Activated T-helper 2 cell treated with anti-CD3 and anti-CD28 coated beads, Interferon-gamma antibody, Interleukin-2, Interleukin-4, amounts not matched to agents 10 μg/mL and 5 μg/mL and 100 μg/mL, durations not matched to agents 14 hours and 24 hours and 36 hours (primary cell): ENCODE measurements at regions of chr9 and their contacts with region 1.

Region 1: GRCh38 chr9:107489687-107490605 is at the start of gene KLF4:
- DNase-seq: peak; percentile 68
- H3K4me3 Mint-ChIP-seq: peak within 1 kb of the TSS; percentile 71
- H3K27ac Mint-ChIP-seq: no peak within 1 kb of the TSS
- H3K4me1 Mint-ChIP-seq: peaks cover 5% of the 10 kb centered on the region
- H3K27me3 Mint-ChIP-seq: peaks cover 64% of the 10 kb centered on the region
- total RNA-seq, gene KLF4: 0.52 and 1.4 TPM in 2 replicates

Region 2: DNA sequence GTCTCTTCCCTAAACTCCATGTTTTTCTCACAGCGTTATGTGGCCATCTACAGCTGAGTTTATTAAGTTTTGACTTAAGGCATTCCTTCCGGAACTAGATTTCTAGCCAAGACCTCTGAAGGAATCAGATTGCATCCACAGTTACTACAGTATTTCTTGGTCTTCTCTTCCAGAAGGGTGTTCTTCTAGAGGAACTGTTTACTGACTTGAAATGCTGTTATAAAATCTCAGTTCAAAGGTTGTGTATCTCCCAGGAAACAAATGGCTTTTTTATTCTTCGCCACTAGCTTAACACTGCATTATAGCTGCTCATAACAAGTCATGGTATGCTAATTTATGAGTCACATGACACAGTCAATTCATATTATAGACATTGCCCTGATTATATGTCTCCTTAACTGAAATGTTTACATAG is 262.2 kb before region 1 on chr9:
- intact Hi-C with region 1: no loop called
- DNase-seq: no peak
- H3K4me3 Mint-ChIP-seq: no peak overlapping the region
- H3K27ac Mint-ChIP-seq: no peak overlapping the region
- H3K4me1 Mint-ChIP-seq: no peaks in the 10 kb centered on the region
- H3K27me3 Mint-ChIP-seq: peaks cover 41% of the 10 kb centered on the region

Region 3: DNA sequence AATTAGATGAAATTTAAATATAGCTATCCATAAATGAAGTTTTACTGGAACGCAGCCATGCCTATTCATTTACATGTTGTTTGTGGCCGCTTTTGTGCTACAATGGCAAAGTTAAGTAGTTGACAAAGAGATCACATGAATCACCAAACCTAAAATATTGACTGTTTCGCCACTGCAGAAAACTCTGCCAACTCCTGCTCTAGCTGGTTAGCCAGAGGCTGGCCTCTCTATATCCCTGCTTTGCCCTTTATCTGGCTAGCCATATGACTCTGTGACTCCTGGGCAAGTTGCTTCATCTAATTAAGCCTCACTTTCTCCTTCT is 92.3 kb before region 1 on chr9:
- intact Hi-C with region 1: no loop called
- DNase-seq: no peak
- H3K4me3 Mint-ChIP-seq: no peak overlapping the region
- H3K27ac Mint-ChIP-seq: no peak overlapping the region
- H3K4me1 Mint-ChIP-seq: peaks cover 1% of the 10 kb centered on the region
- H3K27me3 Mint-ChIP-seq: no peaks in the 10 kb centered on the region

Region 4: DNA sequence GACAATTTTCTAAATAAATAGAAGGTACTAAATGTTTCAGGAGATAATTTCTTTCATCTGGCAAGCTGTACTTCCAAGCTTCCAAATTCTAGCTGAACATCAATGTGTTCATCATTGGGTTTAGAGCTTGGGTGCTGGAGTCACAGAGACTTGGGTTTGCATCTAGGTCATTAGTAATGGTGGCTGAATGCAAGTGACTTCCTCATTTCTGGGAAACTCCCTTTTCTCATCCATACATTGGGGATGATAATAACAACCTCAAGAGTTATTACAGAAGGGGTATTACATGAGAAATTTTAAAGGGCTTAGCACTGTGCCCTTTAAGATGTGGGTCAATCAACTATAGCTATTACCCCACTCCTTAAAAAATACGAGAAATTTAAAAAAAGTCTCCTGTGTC is 40.7 kb after region 1 on chr9:
- intact Hi-C with region 1: no loop called
- DNase-seq: no peak
- H3K4me3 Mint-ChIP-seq: no peak overlapping the region
- H3K27ac Mint-ChIP-seq: no peak overlapping the region
- H3K4me1 Mint-ChIP-seq: no peaks in the 10 kb centered on the region
- H3K27me3 Mint-ChIP-seq: no peaks in the 10 kb centered on the region

Region 5: DNA sequence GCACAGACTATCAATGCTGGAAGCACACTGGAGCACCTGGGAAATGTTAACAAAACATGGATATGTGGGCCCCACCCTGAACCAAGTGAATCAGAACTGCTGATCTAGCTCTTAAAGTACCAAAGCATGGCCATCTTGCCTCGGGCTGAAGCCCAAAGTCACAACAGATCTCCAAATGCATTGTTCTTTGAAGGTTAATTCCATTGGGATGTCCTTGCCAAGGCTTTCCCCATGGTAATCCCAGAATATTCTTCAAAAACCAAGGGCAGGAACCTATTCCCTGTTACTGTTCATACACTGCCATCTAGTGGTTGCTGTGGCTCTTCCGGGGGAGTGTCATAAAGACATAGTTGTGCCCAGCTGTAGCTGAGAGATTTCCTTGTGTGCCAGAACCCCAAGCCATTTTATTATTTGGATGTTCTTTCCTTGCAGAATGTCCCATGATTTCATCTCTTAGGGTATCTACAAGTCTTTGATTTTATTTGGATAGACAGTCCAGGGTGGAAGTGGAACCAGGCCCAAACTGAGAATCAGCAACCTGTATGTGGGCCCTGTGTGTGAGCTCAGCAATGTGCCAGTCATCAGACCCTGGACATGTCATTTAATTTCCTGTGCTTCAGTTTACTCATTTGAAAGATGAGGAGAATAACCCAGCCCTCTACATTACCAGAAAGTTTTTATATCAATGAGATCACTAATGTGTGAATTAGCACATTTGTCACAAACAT is 1075.9 kb after region 1 on chr9:
- intact Hi-C with region 1: loop called (anchors 5 kb)
- DNase-seq: no peak
- H3K4me3 Mint-ChIP-seq: no peak overlapping the region
- H3K27ac Mint-ChIP-seq: no peak overlapping the region
- H3K4me1 Mint-ChIP-seq: no peaks in the 10 kb centered on the region
- H3K27me3 Mint-ChIP-seq: no peaks in the 10 kb centered on the region